ENCODE measurements at regions of chr4 and their contacts with region 1.

Region 1: GRCh38 chr4:77156533-77156911 is 485 bp upstream of the CCNG2 start:
- DNase-seq: peak; percentile 100
- ATAC-seq: peak; percentile 83
- H3K4me3 ChIP-seq: peak overlapping the region; percentile 81 to 96 (median 87)
- H3K4me3 Mint-ChIP-seq: peak overlapping the region; percentile 97
- H3K27ac ChIP-seq: peak overlapping the region; percentile 95
- H3K27ac Mint-ChIP-seq: peak overlapping the region; percentile 99
- H3K4me1 ChIP-seq: peaks cover 59 to 63% of the 10 kb centered on the region in 2 donors
- H3K4me1 Mint-ChIP-seq: peaks cover 70% of the 10 kb centered on the region
- H3K27me3 ChIP-seq: no peaks in the 10 kb centered on the region
- H3K27me3 Mint-ChIP-seq: no peaks in the 10 kb centered on the region
- CTCF ChIP-seq: no peak

Region 2: DNA sequence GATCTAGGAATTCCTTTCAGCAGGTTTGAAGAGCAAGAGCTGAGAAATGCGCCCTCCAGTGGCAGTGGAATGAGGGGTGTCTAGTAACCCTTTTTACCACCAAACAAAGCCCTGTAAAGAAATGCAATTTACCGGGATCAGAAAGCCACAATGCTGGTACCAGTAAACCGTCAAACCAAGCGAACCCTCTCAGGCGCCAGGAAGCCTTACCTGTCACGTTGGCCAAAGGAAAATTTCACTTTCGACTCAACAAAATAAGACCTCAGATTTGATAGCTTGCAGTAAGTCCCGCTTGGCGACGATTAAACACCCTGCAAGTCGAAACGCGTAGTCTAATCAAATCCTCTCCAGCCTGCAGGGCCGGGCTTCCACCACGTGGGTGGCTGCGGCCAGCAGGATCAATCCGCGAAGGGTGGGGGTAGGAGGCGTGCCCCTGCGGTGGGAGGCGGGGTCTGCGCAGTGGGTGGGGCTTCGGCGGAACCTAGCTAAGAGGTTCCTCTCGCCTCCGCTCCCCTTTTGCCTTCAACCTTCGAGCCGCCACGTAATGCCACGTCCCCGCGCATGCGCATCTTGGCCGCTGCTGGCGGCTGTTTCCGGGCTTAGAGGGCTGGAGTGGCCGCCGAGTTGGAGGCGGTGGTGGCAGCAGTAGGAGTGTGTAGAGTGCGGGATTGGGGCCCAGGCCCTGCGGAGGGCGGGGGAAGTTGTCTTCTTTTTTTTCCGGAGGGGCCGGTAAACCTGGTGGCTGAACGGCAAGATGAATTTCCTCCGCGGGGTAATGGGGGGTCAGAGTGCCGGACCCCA is 1432.3 kb before region 1 on chr4 and contains the start of gene USO1:
- CTCF ChIA-PET with region 1: no interaction called
- POLR2A ChIA-PET with region 1: no interaction called
- intact Hi-C with region 1: loop called (anchors 2 kb)
- DNase-seq: peak; percentile 99
- ATAC-seq: peak; percentile 95
- H3K4me3 ChIP-seq: peak within 1 kb of the TSS; percentile 68 to 99 (median 90)
- H3K4me3 Mint-ChIP-seq: peak within 1 kb of the TSS; percentile 99
- H3K27ac ChIP-seq: peak within 1 kb of the TSS; percentile 90 to 91
- H3K27ac Mint-ChIP-seq: peak within 1 kb of the TSS; percentile 99
- H3K4me1 ChIP-seq: peaks cover 25 to 26% of the 10 kb centered on the region in 2 donors
- H3K4me1 Mint-ChIP-seq: peaks cover 56% of the 10 kb centered on the region
- H3K27me3 ChIP-seq: no peaks in the 10 kb centered on the region
- H3K27me3 Mint-ChIP-seq: no peaks in the 10 kb centered on the region
- CTCF ChIP-seq: peak; percentile 86
- total RNA-seq, gene USO1: 42.6 and 45.0 TPM in 2 replicates

Region 3: DNA sequence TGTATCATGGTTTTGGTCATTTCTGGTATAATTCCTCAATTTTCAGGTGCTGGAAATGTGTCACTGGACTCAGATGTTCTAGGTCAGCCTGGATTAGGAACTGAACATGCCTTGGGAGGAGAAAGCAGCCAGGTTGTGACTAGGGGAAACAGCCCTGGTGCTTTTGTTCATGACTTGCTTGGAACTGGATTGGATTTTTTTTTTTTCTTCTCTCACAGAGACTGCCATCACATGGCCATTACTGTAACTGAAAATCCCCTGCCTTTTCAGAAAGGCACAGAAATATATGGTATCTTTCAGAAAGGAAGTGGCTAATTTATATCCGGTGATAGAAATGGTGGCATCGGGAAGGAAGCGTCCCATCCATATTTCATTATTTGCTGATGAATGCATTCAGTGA is 172.4 kb before region 1 on chr4:
- CTCF ChIA-PET with region 1: no interaction called
- POLR2A ChIA-PET with region 1: no interaction called
- intact Hi-C with region 1: no loop called
- DNase-seq: no peak
- ATAC-seq: no peak
- H3K4me3 ChIP-seq: no peak overlapping the region
- H3K4me3 Mint-ChIP-seq: no peak overlapping the region
- H3K27ac ChIP-seq: no peak overlapping the region
- H3K27ac Mint-ChIP-seq: no peak overlapping the region
- H3K4me1 ChIP-seq: peaks cover 0 to 5% of the 10 kb centered on the region in 2 donors
- H3K4me1 Mint-ChIP-seq: peaks cover 7% of the 10 kb centered on the region
- H3K27me3 ChIP-seq: no peaks in the 10 kb centered on the region
- H3K27me3 Mint-ChIP-seq: no peaks in the 10 kb centered on the region
- CTCF ChIP-seq: no peak

Region 4: GRCh38 chr4:77052352-77052751 is 104.2 kb before region 1 on chr4:
- CTCF ChIA-PET with region 1: interaction called, 9 read pairs
- POLR2A ChIA-PET with region 1: interaction called, 3 read pairs
- intact Hi-C with region 1: loop called (anchors 1 kb)
- DNase-seq: peak; percentile 70
- ATAC-seq: no peak
- H3K4me3 ChIP-seq: no peak overlapping the region
- H3K4me3 Mint-ChIP-seq: no peak overlapping the region
- H3K27ac ChIP-seq: no peak overlapping the region
- H3K27ac Mint-ChIP-seq: peak overlapping the region; percentile 59
- H3K4me1 ChIP-seq: no peaks in the 10 kb centered on the region
- H3K4me1 Mint-ChIP-seq: no peaks in the 10 kb centered on the region
- H3K27me3 ChIP-seq: no peaks in the 10 kb centered on the region
- H3K27me3 Mint-ChIP-seq: no peaks in the 10 kb centered on the region
- CTCF ChIP-seq: peak; percentile 61

Region 5: DNA sequence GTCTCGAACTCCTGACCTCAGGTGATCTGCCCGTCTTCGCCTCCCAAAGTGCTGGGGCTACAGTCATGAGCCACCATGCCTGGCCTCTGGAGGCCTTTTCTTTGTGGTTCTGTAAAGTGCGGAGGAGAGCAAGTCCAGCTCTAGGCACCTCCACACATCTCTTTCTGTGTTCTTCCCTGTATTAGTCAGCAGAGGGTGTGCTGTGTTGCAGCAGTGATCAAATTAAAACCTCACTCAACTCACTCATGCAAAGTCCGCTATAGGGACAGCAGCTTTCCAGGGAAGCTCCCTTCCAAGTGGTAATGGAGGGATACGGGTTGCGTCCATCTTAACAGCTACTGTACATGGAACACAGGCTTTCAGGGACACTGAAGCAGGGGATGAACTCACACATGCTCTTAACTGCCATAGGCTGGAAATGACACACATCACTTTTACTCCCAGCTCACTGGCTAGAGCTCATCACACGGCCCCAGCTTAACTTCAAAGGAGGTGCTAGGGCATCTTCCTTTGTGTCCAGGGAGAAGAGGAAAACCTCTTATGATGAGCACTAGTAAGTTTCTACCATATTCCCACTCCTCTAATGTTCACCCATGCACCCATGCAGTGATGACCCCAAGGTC is 35.5 kb before region 1 on chr4:
- CTCF ChIA-PET with region 1: interaction called, 106 read pairs
- POLR2A ChIA-PET with region 1: interaction called, 34 read pairs
- intact Hi-C with region 1: loop called (anchors 1 kb)
- DNase-seq: peak; percentile 47
- ATAC-seq: peak; percentile 78
- H3K4me3 ChIP-seq: no peak overlapping the region
- H3K4me3 Mint-ChIP-seq: peak overlapping the region; percentile 49
- H3K27ac ChIP-seq: no peak overlapping the region
- H3K27ac Mint-ChIP-seq: peak overlapping the region; percentile 20
- H3K4me1 ChIP-seq: peaks cover 42 to 49% of the 10 kb centered on the region in 2 donors
- H3K4me1 Mint-ChIP-seq: peaks cover 53% of the 10 kb centered on the region
- H3K27me3 ChIP-seq: no peaks in the 10 kb centered on the region
- H3K27me3 Mint-ChIP-seq: no peaks in the 10 kb centered on the region
- CTCF ChIP-seq: peak; percentile 42

Region 6: GRCh38 chr4:77193511-77194102 is 37.1 kb after region 1 on chr4:
- CTCF ChIA-PET with region 1: interaction called, 23 read pairs
- POLR2A ChIA-PET with region 1: interaction called, 34 read pairs
- intact Hi-C with region 1: loop called (anchors 1 kb)
- DNase-seq: peak; percentile 91
- ATAC-seq: peak; percentile 92
- H3K4me3 ChIP-seq: peak overlapping the region; percentile 22 to 60 (median 49)
- H3K4me3 Mint-ChIP-seq: peak overlapping the region; percentile 91
- H3K27ac ChIP-seq: peak overlapping the region; percentile 69 to 86
- H3K27ac Mint-ChIP-seq: peak overlapping the region; percentile 97
- H3K4me1 ChIP-seq: peaks cover 36 to 49% of the 10 kb centered on the region in 2 donors
- H3K4me1 Mint-ChIP-seq: peaks cover 52% of the 10 kb centered on the region
- H3K27me3 ChIP-seq: no peaks in the 10 kb centered on the region
- H3K27me3 Mint-ChIP-seq: no peaks in the 10 kb centered on the region
- CTCF ChIP-seq: no peak

Region 7: DNA sequence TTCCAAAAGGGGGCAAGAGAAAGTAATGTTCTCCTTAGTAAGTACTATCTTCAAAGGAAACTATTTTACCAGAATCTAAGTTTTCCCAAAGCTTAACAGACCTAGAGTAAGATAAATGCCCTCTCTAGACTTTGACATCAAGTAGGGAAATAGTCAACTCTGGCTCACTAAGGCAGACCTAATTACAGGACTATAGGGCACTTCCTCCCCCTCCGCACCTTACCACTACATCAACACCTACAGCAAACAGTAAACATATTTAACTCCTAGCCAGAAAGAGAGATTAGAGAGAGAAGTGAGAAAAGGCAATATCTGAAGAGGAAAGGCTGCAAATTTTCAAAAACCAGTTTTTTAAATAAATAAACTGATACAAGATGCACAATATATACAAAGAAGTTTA is 602.3 kb after region 1 on chr4:
- CTCF ChIA-PET with region 1: no interaction called
- POLR2A ChIA-PET with region 1: no interaction called
- intact Hi-C with region 1: no loop called
- DNase-seq: no peak
- ATAC-seq: no peak
- H3K4me3 ChIP-seq: no peak overlapping the region
- H3K4me3 Mint-ChIP-seq: no peak overlapping the region
- H3K27ac ChIP-seq: peak overlapping the region in 1 of 2 donors; percentile 20
- H3K27ac Mint-ChIP-seq: no peak overlapping the region
- H3K4me1 ChIP-seq: no peaks in the 10 kb centered on the region
- H3K4me1 Mint-ChIP-seq: no peaks in the 10 kb centered on the region
- H3K27me3 ChIP-seq: no peaks in the 10 kb centered on the region
- H3K27me3 Mint-ChIP-seq: no peaks in the 10 kb centered on the region
- CTCF ChIP-seq: no peak

Region 8: DNA sequence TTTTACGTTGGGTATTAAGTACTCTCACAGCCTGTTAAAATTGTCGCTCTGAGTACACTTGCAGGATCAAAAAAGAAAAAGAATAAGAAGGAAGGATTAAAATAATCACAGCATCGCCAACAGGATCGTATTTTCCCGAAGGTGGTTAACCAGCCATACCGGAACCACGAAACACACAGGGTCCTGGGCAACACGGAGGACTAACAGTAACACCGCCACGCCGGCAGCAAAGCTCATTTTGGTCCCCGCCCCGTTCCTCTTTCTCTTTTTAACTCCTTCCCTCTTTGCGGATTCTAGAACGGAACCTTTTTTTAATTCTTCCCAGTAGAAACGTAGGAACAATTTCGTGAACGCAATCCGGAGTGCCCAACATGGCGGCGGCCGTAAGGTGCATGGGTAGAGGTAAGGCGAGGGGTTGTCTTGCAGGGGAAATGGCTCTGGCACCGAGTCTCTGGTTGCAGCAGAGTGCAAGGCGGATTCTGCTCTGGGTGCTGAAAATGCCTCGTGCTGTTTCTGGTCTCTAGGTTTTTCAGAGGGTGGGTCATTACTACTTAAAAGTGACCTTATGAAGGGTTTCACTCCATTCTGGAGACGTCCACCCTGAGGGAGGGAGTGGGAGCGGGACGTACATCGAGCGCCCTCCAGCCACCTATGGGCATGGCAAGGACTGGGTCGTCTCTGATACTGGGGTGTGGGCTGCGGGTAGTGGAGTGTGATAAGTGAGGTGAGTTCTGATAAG is 706.1 kb after region 1 on chr4 and contains the start of gene MRPL1:
- CTCF ChIA-PET with region 1: no interaction called
- POLR2A ChIA-PET with region 1: no interaction called
- intact Hi-C with region 1: loop called (anchors 2 kb)
- DNase-seq: peak; percentile 95
- ATAC-seq: peak; percentile 86
- H3K4me3 ChIP-seq: peak within 1 kb of the TSS; percentile 68 to 98 (median 80)
- H3K4me3 Mint-ChIP-seq: peak within 1 kb of the TSS; percentile 99
- H3K27ac ChIP-seq: peak within 1 kb of the TSS; percentile 99 to 100
- H3K27ac Mint-ChIP-seq: peak within 1 kb of the TSS; percentile 98
- H3K4me1 ChIP-seq: peaks cover 17 to 21% of the 10 kb centered on the region in 2 donors
- H3K4me1 Mint-ChIP-seq: peaks cover 41% of the 10 kb centered on the region
- H3K27me3 ChIP-seq: no peaks in the 10 kb centered on the region
- H3K27me3 Mint-ChIP-seq: no peaks in the 10 kb centered on the region
- CTCF ChIP-seq: no peak
- total RNA-seq, gene MRPL1: 22.7 and 23.3 TPM in 2 replicates

Measured in B cell (primary cell).